Head of caudate nucleus (tissue), 42 donors: ENCODE measurements at regions of chr18 and their contacts with region 1.

Region 1: DNA sequence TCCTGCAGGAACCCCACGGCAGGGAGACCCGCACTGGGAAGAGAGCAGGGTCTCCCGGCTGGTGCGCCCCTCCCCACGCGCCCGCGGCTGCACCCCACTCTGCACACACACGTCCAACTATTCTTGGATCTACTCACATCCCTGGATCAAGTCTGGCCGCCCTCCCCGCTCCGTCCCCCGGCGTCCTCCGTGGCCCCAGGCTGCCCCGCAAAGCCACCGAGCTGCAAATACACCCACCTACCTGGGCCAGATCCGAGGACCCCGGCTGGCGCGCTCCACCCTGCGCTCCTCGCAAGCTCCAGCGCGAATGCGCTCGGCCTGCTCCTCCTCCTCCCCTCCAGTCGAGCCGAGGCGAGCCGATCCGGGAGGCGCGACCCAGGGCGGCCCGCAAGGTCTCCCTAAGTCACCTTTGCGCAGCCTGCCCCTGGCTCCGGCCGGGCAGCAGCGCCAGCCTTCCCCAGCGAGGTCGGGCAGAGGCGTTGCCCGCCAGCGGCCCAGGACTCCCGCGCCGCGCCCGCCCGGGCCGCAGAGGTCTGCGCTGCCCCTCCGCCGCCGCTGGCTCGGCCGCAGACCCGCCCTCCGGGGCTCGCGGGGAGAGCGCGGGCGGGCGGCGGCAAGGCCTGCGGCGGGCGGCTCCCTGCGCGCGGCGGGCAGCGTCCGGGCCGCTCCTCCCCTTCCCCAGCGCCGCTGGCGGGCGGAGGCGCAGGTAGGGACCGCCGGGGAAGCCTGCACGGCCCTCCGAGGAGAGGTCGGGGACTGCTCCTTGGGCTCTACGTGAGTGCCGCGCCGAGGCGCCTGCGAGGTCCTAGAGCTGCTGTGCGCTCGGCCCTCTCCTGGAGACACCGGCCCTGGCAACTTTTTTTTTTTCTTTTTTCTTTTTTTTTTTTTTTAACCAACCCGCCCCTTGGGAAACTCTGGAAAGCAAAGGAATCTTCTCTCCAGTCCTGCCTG is 126.0 kb downstream of the OSBPL1A start:
- DNase-seq: peak; percentile 39 to 86 (median 74)

Region 2: DNA sequence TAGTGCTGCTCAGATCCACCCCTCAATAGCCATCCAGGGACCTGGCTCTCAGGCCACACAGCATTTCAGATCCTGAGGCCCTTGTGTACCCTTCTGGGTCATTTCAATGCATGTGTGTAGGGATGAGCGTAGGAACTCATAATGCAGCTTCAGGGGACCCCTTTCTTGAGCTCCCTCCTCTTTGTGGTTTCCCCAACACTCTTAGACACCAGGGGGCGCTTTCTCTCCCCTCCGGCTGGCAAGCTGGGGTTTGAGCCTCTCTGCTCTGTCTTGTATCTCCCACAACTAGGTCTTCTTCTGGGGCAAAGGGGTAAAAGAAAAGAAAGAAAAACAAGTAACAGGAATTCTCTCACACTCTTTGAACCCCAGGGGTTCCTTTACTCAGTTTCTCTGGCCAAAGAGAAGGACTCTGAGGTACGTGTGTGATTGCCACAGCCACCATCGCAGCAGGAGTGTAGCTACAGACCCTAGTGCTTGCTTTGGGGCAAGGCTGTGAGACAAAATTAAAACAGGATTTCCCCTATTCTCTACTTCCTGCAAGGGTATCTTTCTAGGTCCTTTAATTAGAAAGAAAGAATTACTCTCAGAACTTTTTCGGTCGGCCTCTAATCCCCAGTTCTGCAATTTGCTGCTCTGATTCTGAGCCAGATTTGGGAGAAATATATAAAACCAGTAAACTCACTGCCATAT is 94.8 kb before region 1 on chr18:
- intact Hi-C with region 1: loop called (anchors 5 kb)
- DNase-seq: peak; percentile 57 to 96 (median 86)

Region 3: DNA sequence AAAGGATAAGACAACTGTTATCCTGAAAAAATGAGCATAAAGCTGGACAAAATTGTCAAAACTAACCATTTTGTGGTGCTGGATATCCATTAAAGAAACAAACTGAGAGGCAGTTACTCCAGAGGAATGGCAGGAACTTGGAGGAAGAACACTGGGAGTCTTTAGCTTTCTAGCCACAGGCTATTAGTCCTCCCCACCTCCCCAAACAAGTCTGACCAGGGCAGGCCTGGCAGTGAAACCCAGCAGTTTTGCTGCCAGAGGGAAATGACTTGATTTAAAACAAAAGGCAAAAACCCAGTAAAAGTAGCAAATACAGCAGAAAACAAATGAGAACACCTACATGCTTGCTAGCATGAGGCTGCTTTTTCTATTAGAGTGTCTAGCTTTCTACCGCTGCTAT is 91.1 kb after region 1 on chr18:
- intact Hi-C with region 1: no loop called
- DNase-seq: peak in 2 of 42 donors; percentile 35 to 36